Activated CD4-positive, alpha-beta T cell treated with anti-CD3 and anti-CD28 coated beads for 36 hours (primary cell): ENCODE measurements at regions of chr6 and their contacts with region 1.

Region 1: DNA sequence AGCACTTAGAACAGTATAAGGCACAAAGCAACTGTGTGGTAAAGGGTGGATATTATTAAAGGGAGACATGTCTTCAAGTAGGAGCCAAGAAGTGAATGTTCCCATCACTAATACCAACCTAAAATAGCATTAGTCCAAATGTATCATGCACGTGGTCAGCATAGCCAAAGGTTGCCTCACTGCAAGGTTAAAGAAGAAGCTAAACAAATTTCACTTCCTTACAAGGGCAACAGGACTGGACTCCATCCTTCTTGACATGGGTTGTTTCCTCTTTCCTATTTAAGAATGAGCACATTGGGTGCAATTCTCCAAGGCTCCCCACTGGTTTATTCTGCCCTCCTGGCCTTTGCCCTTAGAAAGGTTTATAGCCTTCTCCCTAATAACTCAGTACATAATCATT is 186.7 kb downstream of the PHACTR1 start:
- DNase-seq: no peak
- ATAC-seq: no peak
- H3K4me3 Mint-ChIP-seq: no peak overlapping the region
- H3K27ac Mint-ChIP-seq: no peak overlapping the region
- H3K4me1 Mint-ChIP-seq: no peaks in the 10 kb centered on the region
- H3K27me3 Mint-ChIP-seq: peaks cover 22% of the 10 kb centered on the region

Region 2: GRCh38 chr6:12440981-12441380 is 462.3 kb before region 1 on chr6:
- CTCF ChIA-PET with region 1: no interaction called
- POLR2A ChIA-PET with region 1: no interaction called
- intact Hi-C with region 1: no loop called
- DNase-seq: no peak
- ATAC-seq: no peak
- H3K4me3 Mint-ChIP-seq: no peak overlapping the region
- H3K27ac Mint-ChIP-seq: no peak overlapping the region
- H3K4me1 Mint-ChIP-seq: peaks cover 5% of the 10 kb centered on the region
- H3K27me3 Mint-ChIP-seq: peaks cover 17% of the 10 kb centered on the region

Region 3: DNA sequence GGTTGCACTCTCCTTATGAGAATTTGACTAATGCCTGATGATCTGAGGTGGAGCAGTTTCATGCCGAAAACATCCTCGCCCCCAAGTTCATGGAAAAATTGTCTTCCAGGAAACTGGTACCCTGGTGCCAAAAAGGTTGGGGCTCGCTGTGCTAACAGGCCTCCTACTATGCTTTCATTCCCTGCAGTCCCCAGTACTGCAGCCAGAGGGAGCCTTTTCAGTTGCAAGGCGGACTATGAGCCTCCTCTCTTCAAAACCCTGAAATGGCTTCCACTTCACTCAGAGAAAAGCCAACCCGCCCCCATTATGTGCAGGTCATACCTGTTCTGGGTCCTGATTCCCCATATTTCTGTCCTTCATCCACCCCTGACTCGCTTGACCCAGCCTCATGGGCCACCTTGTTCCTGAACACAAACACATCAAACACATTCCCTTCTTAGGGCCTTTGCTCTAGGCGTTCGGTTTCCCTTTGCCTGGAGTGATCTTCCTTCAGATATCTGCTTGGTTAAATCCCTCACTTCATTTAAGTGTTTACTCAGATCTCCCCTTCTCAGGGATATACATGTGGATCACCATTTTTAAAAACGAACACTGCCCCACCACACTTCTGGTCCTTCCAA is 13.0 kb before region 1 on chr6:
- CTCF ChIA-PET with region 1: interaction called, 13 read pairs
- POLR2A ChIA-PET with region 1: no interaction called
- intact Hi-C with region 1: no loop called
- DNase-seq: peak; percentile 50
- ATAC-seq: no peak
- H3K4me3 Mint-ChIP-seq: no peak overlapping the region
- H3K27ac Mint-ChIP-seq: no peak overlapping the region
- H3K4me1 Mint-ChIP-seq: no peaks in the 10 kb centered on the region
- H3K27me3 Mint-ChIP-seq: peaks cover 3% of the 10 kb centered on the region

Region 4: DNA sequence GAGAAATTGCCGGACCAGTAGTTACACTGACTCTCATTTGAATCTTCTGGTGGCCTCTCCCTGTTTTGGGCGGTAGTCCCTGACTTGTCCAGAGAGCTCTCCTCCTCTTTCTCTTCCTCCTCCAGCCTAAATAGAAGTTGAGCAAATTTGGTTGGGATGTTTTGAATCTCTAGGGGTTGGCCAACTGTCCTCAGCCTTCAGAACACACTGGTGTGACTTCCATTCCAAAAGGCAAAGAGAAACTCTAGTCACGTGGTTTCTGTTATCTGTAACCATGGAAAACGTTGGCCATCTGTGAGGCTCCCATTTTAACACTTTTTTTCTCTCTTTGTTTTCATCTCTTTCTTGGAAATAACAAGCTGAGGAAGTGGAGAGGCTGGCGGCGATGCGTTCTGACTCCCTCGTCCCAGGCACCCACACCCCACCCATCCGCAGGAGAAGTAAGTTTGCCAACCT is 149.8 kb after region 1 on chr6:
- CTCF ChIA-PET with region 1: no interaction called
- POLR2A ChIA-PET with region 1: no interaction called
- intact Hi-C with region 1: no loop called
- DNase-seq: no peak
- ATAC-seq: no peak
- H3K4me3 Mint-ChIP-seq: no peak overlapping the region
- H3K27ac Mint-ChIP-seq: no peak overlapping the region
- H3K4me1 Mint-ChIP-seq: no peaks in the 10 kb centered on the region
- H3K27me3 Mint-ChIP-seq: peaks cover 9% of the 10 kb centered on the region